HepG2 (cell line): ENCODE measurements at regions of chr1 and their contacts with region 1.

Region 1: GRCh38 chr1:60978421-60979357 is 103.7 kb upstream of the NFIA start:
- DNase-seq: peak; percentile 26
- ATAC-seq: peak; percentile 98
- H3K4me3 ChIP-seq: no peak overlapping the region
- H3K27ac ChIP-seq: no peak overlapping the region
- H3K4me1 ChIP-seq: no peaks in the 10 kb centered on the region
- H3K27me3 ChIP-seq: peaks cover 0 to 7% of the 10 kb centered on the region in 2 experiments; a peak in 1 of 5 replicates
- CTCF ChIP-seq: peak; percentile 78
- EP300 ChIP-seq: no peak
- POLR2A ChIP-seq: no peak
- RAD21 ChIP-seq: peak; percentile 66

Region 2: GRCh38 chr1:61141288-61142042 is 162.8 kb after region 1 on chr1:
- CTCF ChIA-PET with region 1: no interaction called
- POLR2A ChIA-PET with region 1: no interaction called
- in situ Hi-C with region 1: no loop called
- intact Hi-C with region 1: loop called (anchors 10 kb)
- DNase-seq: peak; percentile 27
- ATAC-seq: no peak
- H3K4me3 ChIP-seq: no peak overlapping the region
- H3K27ac ChIP-seq: no peak overlapping the region
- H3K4me1 ChIP-seq: peaks cover 54% of the 10 kb centered on the region
- H3K27me3 ChIP-seq: no peaks in the 10 kb centered on the region
- CTCF ChIP-seq: no peak
- EP300 ChIP-seq: no peak
- POLR2A ChIP-seq: no peak
- RAD21 ChIP-seq: no peak

Region 3: DNA sequence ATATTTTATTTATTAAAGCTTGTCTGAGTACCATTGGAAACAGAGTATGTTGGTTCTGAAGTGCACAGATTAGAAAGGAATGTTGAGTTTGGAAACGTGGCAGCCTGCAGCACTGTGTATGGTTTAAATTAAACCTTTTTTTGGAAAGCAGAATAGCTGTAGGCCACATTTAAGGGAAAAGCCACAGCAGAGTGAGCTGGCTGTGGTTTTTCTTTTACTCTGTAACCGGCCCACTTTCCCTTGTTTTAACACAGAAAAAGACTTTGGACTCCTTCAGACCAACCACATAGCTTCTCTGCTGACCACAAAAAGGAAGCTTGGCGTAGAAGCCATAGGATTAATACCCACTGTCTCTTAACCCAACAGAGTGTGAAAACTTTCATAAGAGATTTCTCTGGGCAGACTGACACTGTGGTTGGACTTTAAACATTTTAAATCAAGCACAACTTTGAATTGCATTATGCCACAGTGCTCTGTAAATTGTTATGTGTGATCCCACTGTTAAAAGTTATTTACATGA is 178.8 kb after region 1 on chr1:
- CTCF ChIA-PET with region 1: no interaction called
- POLR2A ChIA-PET with region 1: no interaction called
- in situ Hi-C with region 1: no loop called
- intact Hi-C with region 1: no loop called
- DNase-seq: peak; percentile 85
- ATAC-seq: peak; percentile 93
- H3K4me3 ChIP-seq: peak overlapping the region in 1 of 3 experiments; percentile 31; a peak in 2 of 6 replicates
- H3K27ac ChIP-seq: peak overlapping the region; percentile 65
- H3K4me1 ChIP-seq: peaks cover 58% of the 10 kb centered on the region
- H3K27me3 ChIP-seq: no peaks in the 10 kb centered on the region
- CTCF ChIP-seq: no peak
- EP300 ChIP-seq: 0 out of 4 replicates have a peak, but pooled peaks of 1 of the 2 experiments have one; percentile 39
- POLR2A ChIP-seq: no peak
- RAD21 ChIP-seq: no peak

Region 4: DNA sequence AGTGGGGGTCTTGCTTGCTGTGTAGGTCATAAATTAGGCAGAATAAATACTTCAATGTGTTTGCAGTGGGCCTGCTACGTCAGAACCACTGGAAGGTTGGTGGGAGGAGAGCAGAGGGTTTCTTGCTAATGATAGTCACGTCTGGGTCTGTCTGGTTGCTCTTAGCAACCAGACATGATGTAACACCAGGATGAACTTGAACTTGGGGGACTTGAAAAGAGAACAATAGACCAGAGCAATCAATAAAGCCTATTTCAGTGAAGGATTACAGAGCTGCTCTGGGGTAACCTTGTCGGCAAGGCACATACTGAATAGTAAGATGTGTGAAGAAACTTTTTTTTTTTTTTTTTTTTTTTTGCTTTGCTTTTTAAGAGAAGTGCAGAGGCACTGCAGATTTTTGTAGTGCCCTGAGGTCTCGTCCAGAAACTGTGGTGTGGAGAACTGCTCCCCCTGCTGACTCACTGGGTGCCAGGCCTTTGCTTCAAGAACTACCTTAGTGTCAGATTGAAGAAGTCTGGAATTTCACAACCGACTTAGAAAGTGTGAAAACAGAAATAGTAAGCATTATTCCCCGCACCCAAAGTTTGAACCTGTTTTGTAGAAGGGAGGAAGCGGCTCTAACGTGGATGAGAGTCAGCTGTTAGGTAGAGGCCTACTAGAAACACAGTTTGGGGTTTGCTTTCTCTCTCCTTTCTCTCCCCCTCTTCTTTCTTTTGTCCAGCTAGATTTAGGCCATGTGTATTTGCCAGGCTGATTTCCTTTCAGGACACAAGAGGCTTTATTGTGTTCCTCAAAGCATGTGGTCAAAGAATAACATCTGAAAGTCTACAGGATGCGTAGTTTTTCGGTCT is 474.6 kb after region 1 on chr1:
- CTCF ChIA-PET with region 1: no interaction called
- POLR2A ChIA-PET with region 1: no interaction called
- in situ Hi-C with region 1: loop called (anchors 10 kb)
- intact Hi-C with region 1: loop called (anchors 2 kb)
- DNase-seq: peak; percentile 92
- ATAC-seq: peak; percentile 74
- H3K4me3 ChIP-seq: no peak overlapping the region
- H3K27ac ChIP-seq: peak overlapping the region; percentile 36
- H3K4me1 ChIP-seq: peaks cover 48% of the 10 kb centered on the region
- H3K27me3 ChIP-seq: no peaks in the 10 kb centered on the region
- CTCF ChIP-seq: peak; percentile 73
- EP300 ChIP-seq: peak in 1 of 2 experiments; percentile 35; a peak in 1 of 4 replicates
- POLR2A ChIP-seq: peak; percentile 27 to 31; a peak in 1 of 4 replicates
- RAD21 ChIP-seq: 0 out of 2 replicates have a peak, but pooled peaks have one; percentile 41

Region 5: DNA sequence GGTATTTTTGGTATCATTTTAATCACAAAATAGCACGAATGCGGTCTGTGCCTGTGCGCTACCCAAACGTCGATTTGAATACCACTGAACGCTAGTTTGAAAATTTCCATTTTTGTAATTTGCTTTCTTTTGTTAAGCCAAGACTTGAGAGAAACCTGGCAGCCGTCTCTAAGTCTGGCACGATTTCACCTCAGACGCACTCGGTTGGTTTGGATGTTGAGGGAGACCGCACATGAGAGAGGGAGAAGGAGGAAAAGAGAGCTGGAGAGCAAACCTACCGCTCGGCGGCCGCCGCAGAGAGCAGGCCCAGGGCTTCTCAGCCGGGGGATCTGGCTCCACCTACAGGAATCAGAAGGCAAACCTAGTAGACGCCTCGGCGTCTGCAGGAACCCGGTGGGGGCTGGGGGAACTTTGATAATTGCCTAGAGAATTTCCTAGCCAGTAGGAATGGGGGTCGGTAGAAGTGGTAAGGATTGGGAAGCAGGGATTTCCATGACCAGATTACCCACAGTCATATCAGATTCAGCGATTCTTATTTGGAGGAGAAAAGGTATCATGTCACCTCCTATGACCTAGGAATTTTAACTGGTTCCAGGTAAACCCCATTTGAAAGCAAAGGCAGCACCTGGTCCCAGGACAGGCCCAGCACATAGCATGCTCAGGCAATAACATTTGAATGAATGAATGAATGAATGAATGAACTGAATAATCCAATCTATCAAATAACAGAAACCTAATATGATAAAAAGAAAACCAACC is 663.1 kb after region 1 on chr1:
- CTCF ChIA-PET with region 1: no interaction called
- POLR2A ChIA-PET with region 1: no interaction called
- in situ Hi-C with region 1: loop called (anchors 10 kb)
- intact Hi-C with region 1: no loop called
- DNase-seq: peak; percentile 20
- ATAC-seq: peak; percentile 99
- H3K4me3 ChIP-seq: no peak overlapping the region
- H3K27ac ChIP-seq: no peak overlapping the region
- H3K4me1 ChIP-seq: peaks cover under 1% of the 10 kb centered on the region; the same call in 1 of the 2 replicates
- H3K27me3 ChIP-seq: peaks cover 0 to 36% of the 10 kb centered on the region in 2 experiments; a peak in 3 of 5 replicates
- CTCF ChIP-seq: peak; percentile 78
- EP300 ChIP-seq: no peak
- POLR2A ChIP-seq: no peak
- RAD21 ChIP-seq: peak; percentile 50; the same call in 1 of the 2 replicates